ENCODE measurements at regions of chr9 and their contacts with region 1.

Region 1: DNA sequence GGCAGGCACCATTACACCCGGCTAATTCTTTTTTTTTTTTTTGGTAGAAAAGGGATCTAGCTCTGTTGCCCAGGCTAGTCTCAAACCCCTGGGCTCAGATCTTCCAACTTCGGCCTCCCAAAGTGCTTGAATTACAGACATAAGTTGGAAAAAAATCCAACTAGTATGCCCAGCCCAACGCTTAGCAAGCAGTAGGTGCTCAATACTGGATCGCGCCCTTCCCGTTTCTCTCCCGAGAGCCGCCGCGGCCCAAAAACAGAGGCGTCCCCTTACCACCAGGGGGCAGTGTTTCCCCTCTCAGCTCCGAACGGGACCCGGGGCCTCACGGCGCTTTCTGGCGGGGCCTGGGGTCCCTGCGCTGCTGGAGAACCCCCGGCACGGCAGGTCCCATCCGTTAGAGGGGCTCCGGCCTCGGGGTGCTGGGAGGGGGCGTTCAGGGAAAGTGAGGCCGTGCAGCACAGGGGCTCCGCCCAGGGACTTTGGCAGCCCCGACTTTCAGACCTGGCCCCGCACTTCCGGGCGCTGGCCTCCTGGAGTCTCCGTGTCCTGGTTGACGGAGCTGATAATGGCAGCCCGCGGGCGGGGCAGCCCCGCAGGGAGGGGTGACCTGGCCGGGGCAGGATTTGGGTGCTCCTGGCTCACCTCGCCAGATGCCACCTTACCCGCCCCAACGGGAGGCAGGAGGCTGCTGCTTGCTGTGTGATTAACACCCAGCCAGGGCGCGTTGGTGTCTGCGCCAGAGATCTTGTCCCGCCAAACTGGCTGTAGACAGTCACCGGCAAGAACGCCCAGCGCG is 15.2 kb downstream of the PTGES start:
- DNase-seq: peak; percentile 88
- H3K4me3 ChIP-seq: peak overlapping the region; percentile 58
- H3K27ac ChIP-seq: no peak overlapping the region
- H3K4me1 ChIP-seq: peaks cover 10% of the 10 kb centered on the region
- CTCF ChIP-seq: peak; percentile 89

Region 2: DNA sequence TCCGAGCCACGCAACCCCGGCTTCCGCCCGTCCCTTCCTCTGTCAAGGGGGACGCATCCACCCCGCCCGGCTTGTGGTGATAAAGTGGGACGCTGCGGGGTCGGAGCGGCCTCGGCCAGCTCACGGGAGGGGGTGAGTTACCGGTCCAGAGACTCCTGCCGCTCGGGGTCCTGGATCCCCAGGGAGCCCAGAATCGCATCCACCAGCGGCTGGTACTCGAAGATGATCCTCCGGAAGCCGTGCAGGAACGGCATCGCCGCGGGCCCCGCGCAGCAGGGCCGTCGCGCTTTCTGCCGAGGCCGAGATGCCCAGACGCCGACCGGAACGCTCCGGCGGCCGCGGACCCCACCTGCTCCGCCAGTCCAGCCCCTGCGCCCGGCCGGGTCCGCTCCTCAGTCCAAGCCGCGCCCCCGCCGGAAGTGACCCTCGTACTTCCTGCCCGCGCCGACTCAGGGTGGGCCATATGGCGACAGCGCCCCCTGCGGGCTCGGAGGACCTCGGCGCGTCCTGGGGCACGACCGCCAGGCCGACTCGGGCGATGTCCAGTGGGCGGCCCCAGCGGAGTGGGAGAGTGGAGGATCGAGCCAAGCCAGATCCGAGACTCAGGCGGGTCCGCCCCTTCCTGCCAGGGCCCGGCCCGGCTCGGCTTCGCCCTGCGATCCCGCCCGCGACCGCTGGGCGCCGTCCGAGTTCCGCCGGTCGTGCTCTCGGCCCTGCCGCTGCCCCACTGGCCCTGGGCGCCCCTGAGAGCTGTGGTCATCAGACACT is 95.7 kb before region 1 on chr9 and contains the start of gene ASB6:
- CTCF ChIA-PET with region 1: no interaction called
- POLR2A ChIA-PET with region 1: no interaction called
- intact Hi-C with region 1: loop called (anchors 5 kb)
- DNase-seq: peak; percentile 93
- H3K4me3 ChIP-seq: peak within 1 kb of the TSS; percentile 97
- H3K27ac ChIP-seq: peak within 1 kb of the TSS; percentile 9
- H3K4me1 ChIP-seq: peaks cover 11% of the 10 kb centered on the region
- CTCF ChIP-seq: peak; percentile 97
- total RNA-seq, gene ASB6: 17.5 and 21.4 TPM in 2 replicates

Region 3: DNA sequence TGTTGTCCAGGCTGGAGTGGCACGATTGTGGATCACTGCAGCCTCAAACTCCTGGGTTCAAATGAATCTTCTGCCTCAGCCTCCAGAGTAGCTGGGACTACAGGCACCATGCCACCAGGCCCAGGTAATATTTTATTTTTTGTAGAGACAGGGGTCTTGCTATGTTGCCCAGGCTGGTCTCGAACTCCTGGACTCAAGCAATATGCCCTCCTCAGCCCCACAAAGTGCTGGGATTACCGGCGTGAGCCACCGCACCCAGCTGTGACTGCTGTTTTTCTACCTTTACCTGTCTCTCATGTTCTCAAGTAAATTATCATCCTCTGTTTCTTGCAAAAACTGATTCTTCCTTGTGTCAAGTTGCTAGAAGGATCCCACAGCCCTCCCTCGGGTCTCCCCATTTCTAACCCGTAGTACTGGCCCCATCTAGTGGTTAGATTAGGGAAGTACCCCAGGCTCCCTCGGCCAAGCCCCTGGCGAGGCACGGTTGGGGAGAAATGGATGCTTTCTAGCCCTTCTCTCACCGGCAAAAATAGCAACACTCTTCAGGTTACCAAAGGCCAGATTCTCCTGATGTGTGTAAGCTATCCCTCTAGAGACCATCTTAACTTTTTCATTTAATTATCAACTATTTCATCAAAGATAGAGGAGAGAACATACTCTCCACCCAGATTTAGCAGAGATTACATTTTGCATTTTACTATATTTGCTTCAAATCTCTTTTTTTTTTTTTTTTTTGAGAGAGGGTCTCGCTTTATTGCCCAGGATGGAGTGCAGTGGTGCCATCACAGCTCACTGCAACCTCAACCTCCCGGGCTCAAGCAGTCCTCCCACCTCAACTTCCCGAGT is 46.1 kb after region 1 on chr9:
- CTCF ChIA-PET with region 1: no interaction called
- POLR2A ChIA-PET with region 1: no interaction called
- intact Hi-C with region 1: loop called (anchors 1 kb)
- DNase-seq: peak; percentile 75
- H3K4me3 ChIP-seq: no peak overlapping the region
- H3K27ac ChIP-seq: no peak overlapping the region
- H3K4me1 ChIP-seq: no peaks in the 10 kb centered on the region
- CTCF ChIP-seq: peak; percentile 95

Region 4: GRCh38 chr9:129796029-129796910 is 58.6 kb after region 1 on chr9:
- CTCF ChIA-PET with region 1: no interaction called
- POLR2A ChIA-PET with region 1: no interaction called
- intact Hi-C with region 1: loop called (anchors 2 kb)
- DNase-seq: no peak
- H3K4me3 ChIP-seq: no peak overlapping the region
- H3K27ac ChIP-seq: no peak overlapping the region
- H3K4me1 ChIP-seq: no peaks in the 10 kb centered on the region
- CTCF ChIP-seq: no peak

Region 5: DNA sequence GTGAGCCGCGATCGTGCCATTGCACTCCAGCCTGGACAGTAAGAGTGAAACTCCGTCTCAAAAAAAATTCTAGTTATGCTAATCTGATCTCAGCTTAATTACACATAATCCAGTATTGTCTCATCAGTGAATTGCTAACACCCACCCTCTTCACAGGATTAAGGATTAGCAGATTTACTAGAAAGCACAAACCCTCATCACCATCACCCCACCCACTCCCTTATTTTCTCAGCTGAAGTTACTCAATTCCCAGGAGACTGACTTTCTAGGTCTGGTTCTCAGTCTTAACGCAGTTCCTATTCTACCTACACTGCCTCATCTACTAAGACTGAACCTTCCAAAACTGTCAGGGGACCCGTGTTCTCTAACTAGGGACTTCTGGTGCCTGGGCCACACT is 74.3 kb after region 1 on chr9:
- CTCF ChIA-PET with region 1: no interaction called
- POLR2A ChIA-PET with region 1: no interaction called
- intact Hi-C with region 1: no loop called
- DNase-seq: peak; percentile 18
- H3K4me3 ChIP-seq: no peak overlapping the region
- H3K27ac ChIP-seq: no peak overlapping the region
- H3K4me1 ChIP-seq: no peaks in the 10 kb centered on the region
- CTCF ChIP-seq: no peak

Measured in OCI-LY7 (cell line).